ENCODE measurements at regions of chr3 and their contacts with region 1.

Region 1: DNA sequence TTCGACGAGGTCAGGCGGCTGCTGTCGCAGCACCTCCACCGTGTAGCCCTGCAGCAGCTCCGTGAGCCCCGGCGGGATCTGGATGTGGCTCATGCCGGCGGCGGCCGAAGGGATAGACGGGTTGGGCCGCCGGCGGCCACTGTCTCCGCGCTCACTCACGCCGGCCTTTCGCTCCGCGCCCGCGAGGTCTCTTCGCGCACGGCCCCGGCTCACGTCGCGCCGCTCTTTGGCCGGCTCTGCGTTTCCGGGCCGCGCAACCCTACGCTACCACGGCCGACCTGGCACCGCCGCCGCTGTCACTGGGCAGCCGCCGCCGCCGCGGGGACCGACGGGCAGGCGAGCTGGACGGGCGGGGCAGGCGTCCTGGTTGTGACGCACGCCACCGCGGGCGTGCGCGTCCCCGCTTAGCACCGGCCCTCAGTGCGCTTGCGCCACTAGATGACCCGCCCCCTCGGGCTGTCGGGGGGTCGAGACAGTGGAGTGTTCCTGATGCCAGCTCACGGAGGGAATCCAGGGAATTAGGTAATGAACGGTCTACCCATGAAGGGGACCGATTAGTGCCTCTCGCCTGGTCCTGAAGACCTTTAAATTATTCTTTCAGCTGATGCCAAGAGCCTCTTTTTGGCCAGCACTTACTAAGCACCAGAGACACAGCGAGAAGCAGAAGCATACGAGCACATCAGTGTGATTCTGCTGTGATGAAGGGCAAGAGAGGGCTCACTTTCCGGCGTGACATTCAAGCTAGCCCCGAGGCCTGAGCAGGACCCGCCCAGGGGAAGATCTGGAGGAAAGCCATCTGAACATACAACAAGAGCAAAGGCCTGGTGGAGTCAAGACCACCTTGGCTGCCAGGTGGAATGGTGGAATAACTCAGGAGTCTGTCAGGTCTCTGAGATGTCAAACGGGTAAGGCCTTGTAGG is at the start of gene PRKAR2A:
- DNase-seq: peak; percentile 65 to 88 (median 78)
- ATAC-seq: peak; percentile 73 to 83
- H3K4me3 Mint-ChIP-seq: peak within 1 kb of the TSS; percentile 81 to 94 (median 91)
- H3K27ac Mint-ChIP-seq: peak within 1 kb of the TSS; percentile 93 to 99 (median 97)
- H3K4me1 Mint-ChIP-seq: peaks cover 10 to 34% (median 25%) of the 10 kb centered on the region in 4 donors
- H3K27me3 Mint-ChIP-seq: no peaks in the 10 kb centered on the region
- polyA plus RNA-seq, gene PRKAR2A: 10.3 to 14.0 (median 11.0) TPM

Region 2: GRCh38 chr3:48811524-48811923 is 36.2 kb before region 1 on chr3:
- POLR2A ChIA-PET with region 1: interaction called, 15 read pairs
- DNase-seq: no peak
- ATAC-seq: no peak
- H3K4me3 Mint-ChIP-seq: peak overlapping the region in 7 of 10 donors; percentile 27 to 61 (median 40)
- H3K27ac Mint-ChIP-seq: peak overlapping the region; percentile 73 to 95 (median 92)
- H3K4me1 Mint-ChIP-seq: peaks cover 9 to 43% (median 30%) of the 10 kb centered on the region in 4 donors
- H3K27me3 Mint-ChIP-seq: no peaks in the 10 kb centered on the region

Region 3: GRCh38 chr3:48877671-48878070 is 29.9 kb after region 1 on chr3:
- POLR2A ChIA-PET with region 1: no interaction called
- DNase-seq: no peak
- ATAC-seq: no peak
- H3K4me3 Mint-ChIP-seq: no peak overlapping the region
- H3K27ac Mint-ChIP-seq: peak overlapping the region in 3 of 10 donors; percentile 31 to 65 (median 57)
- H3K4me1 Mint-ChIP-seq: peaks cover 0 to 8% (median 3%) of the 10 kb centered on the region in 4 donors
- H3K27me3 Mint-ChIP-seq: no peaks in the 10 kb centered on the region

Region 4: GRCh38 chr3:48918388-48919214 is 70.8 kb after region 1 on chr3 and contains the start of gene ARIH2:
- POLR2A ChIA-PET with region 1: interaction called, 12 read pairs
- DNase-seq: peak; percentile 82 to 93 (median 87)
- ATAC-seq: peak; percentile 81 to 83
- H3K4me3 Mint-ChIP-seq: peak within 1 kb of the TSS; percentile 93 to 99 (median 96)
- H3K27ac Mint-ChIP-seq: peak within 1 kb of the TSS; percentile 96 to 100 (median 99)
- H3K4me1 Mint-ChIP-seq: peaks cover 11 to 36% (median 26%) of the 10 kb centered on the region in 4 donors
- H3K27me3 Mint-ChIP-seq: no peaks in the 10 kb centered on the region
- polyA plus RNA-seq, gene ARIH2: 92.7 to 119 (median 101) TPM

Measured in naive thymus-derived CD8-positive, alpha-beta T cell (primary cell).